ENCODE measurements at regions of chr1 and their contacts with region 1.

Region 1: DNA sequence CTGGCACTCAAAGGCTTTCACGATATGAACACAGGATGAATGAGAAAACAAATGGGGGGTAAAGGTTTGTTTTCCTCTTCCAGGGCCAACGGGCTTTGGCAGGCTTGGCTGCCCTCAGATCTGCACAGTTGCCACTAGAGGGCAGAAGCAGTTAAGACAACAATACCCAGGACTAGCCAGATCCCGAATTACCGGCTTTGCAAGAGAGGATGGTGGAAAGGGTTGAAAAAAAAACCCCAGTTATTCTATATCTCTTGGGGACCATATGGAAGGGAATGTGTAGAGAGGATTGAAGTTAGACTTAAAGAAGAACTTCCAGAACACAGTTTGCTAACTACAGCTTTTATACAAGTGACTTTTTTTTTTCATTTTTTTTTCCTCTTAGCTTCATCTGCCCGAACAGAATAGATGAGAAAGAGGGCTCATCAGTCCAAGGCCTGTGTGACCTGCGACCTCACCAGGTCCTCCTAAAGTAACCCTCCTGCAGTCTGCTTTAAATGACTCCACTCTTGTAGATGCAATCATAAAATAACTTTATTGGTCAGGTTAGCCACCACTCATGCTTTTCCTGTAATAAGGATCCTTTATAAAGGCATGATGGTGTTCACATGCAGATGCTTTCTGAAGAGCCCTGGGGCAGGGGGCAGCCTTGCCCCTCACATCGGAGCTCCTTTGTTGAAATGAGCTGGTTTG is 10.7 kb downstream of the FMOD start:
- DNase-seq: peak; percentile 75
- ATAC-seq: peak; percentile 76
- H3K4me3 Mint-ChIP-seq: no peak overlapping the region
- H3K27ac Mint-ChIP-seq: no peak overlapping the region
- H3K4me1 Mint-ChIP-seq: peaks cover 27% of the 10 kb centered on the region
- H3K27me3 Mint-ChIP-seq: peaks cover 7% of the 10 kb centered on the region

Region 2: GRCh38 chr1:203273206-203273868 is 66.9 kb before region 1 on chr1:
- CTCF ChIA-PET with region 1: interaction called, 710 read pairs
- POLR2A ChIA-PET with region 1: interaction called, 4 read pairs
- intact Hi-C with region 1: loop called (anchors 1 kb)
- DNase-seq: peak; percentile 96
- ATAC-seq: peak; percentile 78
- H3K4me3 Mint-ChIP-seq: peak overlapping the region; percentile 70
- H3K27ac Mint-ChIP-seq: peak overlapping the region; percentile 78
- H3K4me1 Mint-ChIP-seq: peaks cover 65% of the 10 kb centered on the region
- H3K27me3 Mint-ChIP-seq: no peaks in the 10 kb centered on the region

Region 3: GRCh38 chr1:203304919-203305808 is 35.1 kb before region 1 on chr1 and contains the start of gene BTG2:
- CTCF ChIA-PET with region 1: interaction called, 122 read pairs
- POLR2A ChIA-PET with region 1: interaction called, 3 read pairs
- intact Hi-C with region 1: no loop called
- DNase-seq: peak; percentile 96
- ATAC-seq: peak; percentile 88
- H3K4me3 Mint-ChIP-seq: peak within 1 kb of the TSS; percentile 98
- H3K27ac Mint-ChIP-seq: peak within 1 kb of the TSS; percentile 97
- H3K4me1 Mint-ChIP-seq: peaks cover 54% of the 10 kb centered on the region
- H3K27me3 Mint-ChIP-seq: no peaks in the 10 kb centered on the region
- total RNA-seq, gene BTG2: 114 to 142 TPM

Region 4: DNA sequence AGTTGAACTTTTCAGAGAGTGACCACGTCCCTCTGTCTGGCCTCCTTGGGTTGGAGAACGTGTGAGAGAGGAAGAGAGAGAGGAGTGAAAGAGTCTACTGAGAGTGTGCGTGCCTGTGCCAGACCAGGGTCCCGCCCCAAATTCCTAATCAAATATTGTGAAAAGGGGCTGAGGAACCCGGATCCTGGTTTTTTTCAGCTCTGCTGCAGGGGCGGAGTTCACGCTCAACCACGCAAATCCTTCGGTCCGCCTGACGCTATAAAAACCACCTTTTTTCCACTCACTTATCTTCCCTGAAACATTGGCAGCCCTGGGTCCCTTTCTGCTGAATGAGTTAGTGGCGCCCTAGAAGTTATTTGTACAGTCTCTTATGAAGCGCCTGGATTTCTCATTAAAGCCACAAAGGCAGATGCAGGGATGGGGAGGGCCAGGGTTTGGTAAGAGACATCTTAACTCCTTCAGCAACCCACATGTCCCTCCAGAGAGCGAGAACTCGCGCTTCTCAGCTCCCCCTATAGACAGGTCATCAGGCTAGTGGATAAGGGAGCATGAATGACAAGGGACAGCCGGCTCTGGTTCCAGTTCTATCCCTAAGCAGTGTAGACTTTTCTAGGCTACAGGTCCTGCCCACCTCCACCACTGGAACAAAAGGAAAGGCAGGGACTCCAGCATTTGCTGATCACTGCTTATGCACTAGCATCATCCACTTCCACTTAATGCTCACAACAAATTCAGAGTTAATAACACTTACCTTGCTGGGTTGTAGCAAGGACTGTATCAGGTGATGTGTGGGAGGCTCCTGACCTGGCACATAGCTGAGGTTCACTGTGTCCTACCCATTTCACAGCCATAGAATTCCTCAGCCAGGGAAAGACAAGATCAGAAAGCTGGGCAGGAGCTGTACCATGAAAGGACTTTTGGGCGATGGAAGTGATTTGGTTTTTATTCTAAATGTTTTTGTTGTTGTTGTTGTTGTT is 11.1 kb after region 1 on chr1 and contains the start of gene FMOD:
- CTCF ChIA-PET with region 1: interaction called, 93 read pairs
- POLR2A ChIA-PET with region 1: no interaction called
- intact Hi-C with region 1: no loop called
- DNase-seq: no peak
- ATAC-seq: peak; percentile 23
- H3K4me3 Mint-ChIP-seq: no peak within 1 kb of the TSS
- H3K27ac Mint-ChIP-seq: no peak within 1 kb of the TSS
- H3K4me1 Mint-ChIP-seq: peaks cover 3% of the 10 kb centered on the region
- H3K27me3 Mint-ChIP-seq: peaks cover 25% of the 10 kb centered on the region
- total RNA-seq, gene FMOD: 0.87 to 0.98 TPM

Region 5: GRCh38 chr1:203823306-203823705 is 483.0 kb after region 1 on chr1:
- CTCF ChIA-PET with region 1: no interaction called
- POLR2A ChIA-PET with region 1: no interaction called
- intact Hi-C with region 1: no loop called
- DNase-seq: no peak
- ATAC-seq: no peak
- H3K4me3 Mint-ChIP-seq: no peak overlapping the region
- H3K27ac Mint-ChIP-seq: no peak overlapping the region
- H3K4me1 Mint-ChIP-seq: peaks cover 26% of the 10 kb centered on the region
- H3K27me3 Mint-ChIP-seq: no peaks in the 10 kb centered on the region